ENCODE measurements at regions of chr5 and their contacts with region 1.

Region 1: DNA sequence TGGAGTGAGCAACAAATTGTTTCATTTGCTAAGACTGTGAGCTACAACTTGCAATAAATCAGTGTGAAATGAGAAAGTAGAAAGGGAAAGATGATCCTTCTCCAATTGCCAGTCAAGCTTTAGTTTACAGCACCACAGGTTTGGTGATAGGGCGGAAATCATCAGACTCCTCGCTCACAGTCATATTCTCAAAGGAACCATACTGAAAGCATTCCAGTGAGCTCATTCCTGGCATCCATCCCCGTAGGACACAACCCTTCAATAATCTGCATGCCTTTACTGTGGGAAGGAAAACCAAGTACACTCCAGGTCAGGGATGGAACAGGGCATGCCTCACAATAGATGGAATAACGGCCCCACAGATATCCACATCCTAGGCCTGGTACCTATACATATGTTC is 80.7 kb downstream of the FSTL4 start:
- DNase-seq: no peak
- H3K4me3 Mint-ChIP-seq: no peak overlapping the region
- H3K27ac Mint-ChIP-seq: no peak overlapping the region
- H3K4me1 Mint-ChIP-seq: peaks cover 3% of the 10 kb centered on the region
- H3K27me3 Mint-ChIP-seq: peaks cover 5% of the 10 kb centered on the region

Region 2: GRCh38 chr5:133499895-133500294 is 31.7 kb before region 1 on chr5:
- intact Hi-C with region 1: loop called (anchors 5 kb)
- DNase-seq: no peak
- H3K4me3 Mint-ChIP-seq: no peak overlapping the region
- H3K27ac Mint-ChIP-seq: no peak overlapping the region
- H3K4me1 Mint-ChIP-seq: peaks cover 18% of the 10 kb centered on the region
- H3K27me3 Mint-ChIP-seq: peaks cover 3% of the 10 kb centered on the region

Region 3: GRCh38 chr5:134769206-134769605 is 1237.6 kb after region 1 on chr5:
- intact Hi-C with region 1: no loop called
- DNase-seq: no peak
- H3K4me3 Mint-ChIP-seq: no peak overlapping the region
- H3K27ac Mint-ChIP-seq: no peak overlapping the region
- H3K4me1 Mint-ChIP-seq: no peaks in the 10 kb centered on the region
- H3K27me3 Mint-ChIP-seq: no peaks in the 10 kb centered on the region